ENCODE measurements at regions of chr10 and their contacts with region 1.

Region 1: DNA sequence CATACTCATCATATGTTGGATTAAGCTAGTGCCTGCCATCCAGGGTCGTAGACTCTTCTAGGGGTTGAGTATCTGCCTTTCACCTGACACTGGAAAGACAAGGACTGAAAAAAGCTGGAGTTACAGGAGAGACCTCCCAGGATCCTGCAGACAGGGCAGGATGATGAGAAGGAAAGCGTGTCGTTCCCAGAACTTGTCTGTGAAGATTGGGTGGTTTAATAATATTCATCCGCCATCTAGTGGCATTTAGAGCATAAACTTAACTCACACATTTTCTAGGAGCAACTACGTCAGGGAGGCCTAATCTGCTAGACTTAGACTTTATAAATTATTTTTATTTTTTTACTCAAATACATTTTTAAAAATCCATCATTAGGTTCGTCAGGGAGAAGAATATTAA is 59.6 kb downstream of the ADRB1 start:
- DNase-seq: no peak
- ATAC-seq: peak; percentile 74

Region 2: GRCh38 chr10:113704637-113705343 is 398.5 kb before region 1 on chr10:
- intact Hi-C with region 1: loop called (anchors 5 kb)
- DNase-seq: no peak
- ATAC-seq: peak; percentile 52

Region 3: DNA sequence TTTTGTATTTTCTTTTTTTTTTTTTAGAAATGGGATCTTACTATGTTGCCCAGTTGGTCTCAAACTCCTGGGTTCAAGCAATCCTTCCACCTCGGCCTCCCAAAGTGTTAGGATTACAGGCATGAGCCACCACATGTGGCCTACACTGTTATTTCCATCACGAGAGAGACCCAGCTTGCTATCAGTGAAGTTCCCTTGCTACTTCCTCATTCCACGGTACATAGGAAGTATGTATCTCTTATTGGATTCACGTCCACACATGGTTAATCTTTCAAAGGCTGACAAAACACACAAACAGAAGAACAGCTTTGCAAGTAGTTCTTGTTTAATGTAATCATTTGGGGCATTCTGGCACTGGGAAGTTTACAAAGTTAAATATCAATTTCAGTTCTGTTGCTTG is 300.3 kb before region 1 on chr10:
- intact Hi-C with region 1: loop called (anchors 5 kb)
- DNase-seq: no peak
- ATAC-seq: no peak

Region 4: DNA sequence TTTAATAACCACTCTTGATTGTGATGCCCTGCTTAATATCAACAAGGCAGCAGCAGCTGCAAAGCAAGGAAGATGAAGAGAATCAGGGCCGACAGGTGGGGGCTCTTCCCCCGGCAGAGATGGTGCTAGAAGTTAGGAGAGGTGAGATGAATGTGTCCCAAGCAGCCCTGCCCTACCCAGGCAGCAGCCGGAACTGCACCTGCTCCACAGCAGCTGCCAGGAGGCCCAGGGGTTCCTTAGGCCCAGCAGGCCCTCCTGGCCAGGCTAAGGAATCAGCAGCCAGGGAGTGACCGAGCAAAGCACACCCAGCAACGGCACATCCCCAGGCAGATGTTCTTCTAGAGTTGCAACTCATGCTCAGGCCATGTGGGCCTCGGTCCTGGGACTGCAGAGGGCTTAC is 283.2 kb after region 1 on chr10:
- intact Hi-C with region 1: no loop called
- DNase-seq: no peak
- ATAC-seq: no peak

Region 5: DNA sequence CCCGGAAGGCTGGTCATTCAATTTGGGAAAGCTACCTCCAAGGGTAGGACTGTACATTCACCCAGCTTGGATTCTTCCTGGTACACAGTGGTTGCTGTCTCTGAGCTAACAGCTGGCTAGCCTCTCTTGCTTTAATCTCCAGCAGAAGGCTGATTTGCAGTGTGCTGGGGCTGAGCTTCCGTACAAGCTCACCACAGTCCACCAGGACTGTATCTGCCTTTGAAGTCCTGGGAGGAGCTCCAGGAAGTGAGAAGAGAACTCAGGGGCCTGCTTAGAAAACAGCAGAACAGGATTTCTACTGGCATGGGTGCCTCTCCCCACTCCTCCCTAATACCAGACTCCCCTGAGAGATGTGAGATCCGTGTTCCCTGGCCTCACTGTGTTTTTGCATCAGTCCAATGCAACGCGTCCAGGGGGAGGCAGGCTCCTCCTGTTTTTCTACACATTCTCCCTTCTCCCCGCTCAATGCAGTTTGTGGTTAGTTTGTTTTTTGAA is 294.4 kb after region 1 on chr10:
- intact Hi-C with region 1: no loop called
- DNase-seq: no peak
- ATAC-seq: peak; percentile 44

Region 6: DNA sequence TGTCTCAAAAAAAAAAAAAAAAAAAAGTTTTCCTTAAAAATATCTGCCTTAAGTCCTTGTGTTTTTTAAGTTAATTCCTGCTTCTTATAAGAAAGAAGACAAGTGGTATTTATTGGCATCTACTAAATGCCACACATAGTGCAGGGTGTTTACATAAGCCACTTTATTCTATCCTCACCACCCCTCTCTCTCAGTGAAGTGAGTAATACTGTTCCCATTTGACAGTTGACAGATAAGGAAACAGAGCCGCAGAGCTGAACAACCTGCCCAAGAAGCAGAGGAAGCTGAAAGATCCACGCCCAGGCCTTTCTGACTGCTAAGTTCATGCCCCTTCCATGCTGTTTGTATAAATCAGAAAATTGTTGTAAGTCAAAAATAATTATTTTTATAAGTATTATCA is 500.7 kb after region 1 on chr10:
- intact Hi-C with region 1: no loop called
- DNase-seq: no peak
- ATAC-seq: peak; percentile 79

Region 7: GRCh38 chr10:115049957-115050356 is 946.7 kb after region 1 on chr10:
- intact Hi-C with region 1: no loop called
- DNase-seq: no peak
- ATAC-seq: no peak

Measured in Right ventricle myocardium superior (tissue), 1 donor.